Naive thymus-derived CD4-positive, alpha-beta T cell (primary cell): ENCODE measurements at regions of chr3 and their contacts with region 1.

Region 1: DNA sequence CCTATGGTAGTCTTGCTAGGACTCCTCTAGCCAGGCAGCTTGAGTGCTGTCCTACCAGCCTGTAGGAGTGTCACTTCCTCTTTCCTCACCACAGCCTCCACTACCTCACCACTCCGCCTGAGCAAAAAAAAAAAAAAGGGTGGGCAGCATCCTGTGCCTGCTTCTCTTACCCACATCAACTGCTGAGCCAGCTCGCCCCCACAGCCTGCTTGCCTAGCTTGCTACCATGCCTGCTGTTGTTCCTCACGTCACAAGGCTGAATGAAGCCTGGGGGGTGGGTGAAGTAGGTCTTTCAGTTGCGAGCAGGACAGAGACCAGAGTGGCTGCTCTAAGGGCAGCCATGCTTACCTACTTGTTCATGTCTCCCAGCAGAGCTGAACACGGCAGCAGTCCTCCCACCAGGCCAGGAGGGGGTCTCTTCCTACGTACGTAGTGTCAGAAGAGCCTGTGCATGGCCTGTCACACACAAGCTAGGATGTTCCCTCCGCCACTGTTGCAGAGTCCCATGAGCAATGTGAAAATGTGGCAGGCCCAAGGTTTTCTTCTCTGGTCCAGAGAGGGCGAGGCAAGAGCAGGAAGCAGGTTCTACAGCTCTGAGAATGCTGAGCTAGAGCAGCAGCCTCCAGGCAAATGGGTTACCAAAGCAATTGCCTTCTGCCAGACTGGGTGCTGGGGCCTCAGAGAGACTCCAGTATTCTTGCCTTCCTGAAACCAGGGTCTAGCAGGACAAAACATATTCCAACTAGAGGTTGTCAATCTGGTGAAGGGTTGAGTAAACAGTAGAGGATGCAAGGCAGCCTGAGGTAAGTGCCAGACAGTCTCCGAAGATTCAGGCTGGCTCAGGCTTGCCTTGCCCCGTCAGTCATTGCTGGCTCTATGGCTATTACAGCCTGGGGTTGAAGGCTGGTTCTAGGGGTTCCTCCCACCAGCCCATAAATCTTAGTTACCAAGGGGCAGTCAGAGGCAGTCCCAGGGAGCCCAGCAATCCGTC is 8.1 kb downstream of the PPM1M start:
- DNase-seq: peak in 8 of 9 donors; percentile 81 to 95 (median 94)
- ATAC-seq: peak; percentile 95
- H3K4me3 ChIP-seq: peak overlapping the region; percentile 38
- H3K4me3 Mint-ChIP-seq: peak overlapping the region; percentile 82 to 97 (median 86)
- H3K27ac ChIP-seq: peak overlapping the region; percentile 87
- H3K27ac Mint-ChIP-seq: peak overlapping the region; percentile 92 to 100 (median 98)
- H3K4me1 ChIP-seq: peaks cover 55 to 91% of the 10 kb centered on the region in 2 donors
- H3K4me1 Mint-ChIP-seq: peaks cover 46 to 99% (median 92%) of the 10 kb centered on the region in 7 donors
- H3K27me3 ChIP-seq: no peaks in the 10 kb centered on the region
- H3K27me3 Mint-ChIP-seq: peaks cover 0 to 4% (median 0%) of the 10 kb centered on the region in 5 donors

Region 2: GRCh38 chr3:52090131-52090932 is 163.3 kb before region 1 on chr3:
- CTCF ChIA-PET with region 1: no interaction called
- POLR2A ChIA-PET with region 1: no interaction called
- intact Hi-C with region 1: no loop called
- DNase-seq: no peak
- ATAC-seq: no peak
- H3K4me3 ChIP-seq: no peak overlapping the region
- H3K4me3 Mint-ChIP-seq: no peak overlapping the region
- H3K27ac ChIP-seq: no peak overlapping the region
- H3K27ac Mint-ChIP-seq: no peak overlapping the region
- H3K4me1 ChIP-seq: peaks cover 0 to 5% of the 10 kb centered on the region in 2 donors
- H3K4me1 Mint-ChIP-seq: peaks cover 11 to 30% (median 19%) of the 10 kb centered on the region in 7 donors
- H3K27me3 ChIP-seq: no peaks in the 10 kb centered on the region
- H3K27me3 Mint-ChIP-seq: no peaks in the 10 kb centered on the region

Region 3: GRCh38 chr3:52231502-52232293 is 21.9 kb before region 1 on chr3:
- CTCF ChIA-PET with region 1: interaction called, 11 read pairs
- POLR2A ChIA-PET with region 1: interaction called, 167 read pairs
- intact Hi-C with region 1: no loop called
- DNase-seq: peak; percentile 77 to 96 (median 88)
- ATAC-seq: peak; percentile 91
- H3K4me3 ChIP-seq: no peak overlapping the region
- H3K4me3 Mint-ChIP-seq: peak overlapping the region; percentile 20 to 69 (median 53)
- H3K27ac ChIP-seq: peak overlapping the region; percentile 42
- H3K27ac Mint-ChIP-seq: peak overlapping the region; percentile 32 to 88 (median 80)
- H3K4me1 ChIP-seq: peaks cover 22 to 35% of the 10 kb centered on the region in 2 donors
- H3K4me1 Mint-ChIP-seq: peaks cover 40 to 63% (median 58%) of the 10 kb centered on the region in 7 donors
- H3K27me3 ChIP-seq: no peaks in the 10 kb centered on the region
- H3K27me3 Mint-ChIP-seq: no peaks in the 10 kb centered on the region